Body of pancreas (tissue), 4 donors: ENCODE measurements at regions of chr22 and their contacts with region 1.

Region 1: DNA sequence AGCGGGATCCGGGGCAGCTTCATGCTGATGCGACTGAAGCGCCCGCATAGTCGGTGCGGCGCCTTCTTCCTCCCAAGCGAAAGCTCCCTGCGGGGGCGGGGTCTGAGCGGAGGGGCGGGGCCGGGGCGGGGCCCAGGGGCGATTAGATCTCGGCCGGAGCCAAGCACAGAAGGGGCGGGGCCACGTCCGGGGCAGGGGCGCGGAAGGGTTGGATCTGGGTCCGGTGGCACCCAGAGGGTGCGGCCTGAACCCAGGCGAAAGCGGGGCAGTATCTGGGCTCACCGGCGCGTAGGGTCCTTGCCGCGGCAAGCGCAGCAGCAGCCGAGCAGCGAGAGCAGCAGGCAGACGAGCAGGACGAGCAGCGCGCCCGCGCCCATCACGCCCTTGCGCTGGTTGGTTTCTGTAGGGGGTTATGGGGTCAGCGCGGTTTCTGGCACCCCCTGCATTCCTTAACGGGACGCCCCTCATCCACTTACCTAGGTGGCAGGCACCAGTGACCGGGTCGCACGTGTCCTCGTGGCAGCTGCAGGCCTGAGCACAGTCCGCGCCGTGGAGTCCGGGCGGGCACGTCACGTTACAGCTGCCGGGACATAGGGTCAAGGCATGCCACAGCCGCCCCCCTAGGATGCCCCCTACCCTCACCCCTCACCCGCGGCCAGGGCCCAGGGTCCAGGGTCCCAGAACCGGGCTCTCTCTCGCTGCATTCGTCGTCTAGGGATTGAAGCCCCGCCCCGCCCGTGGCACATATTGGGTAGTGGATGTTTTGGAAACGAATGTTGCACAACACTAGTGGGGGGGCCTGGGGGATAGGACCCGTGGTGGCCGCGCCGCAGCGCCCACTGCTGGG is 8.1 kb downstream of the SCARF2 start:
- DNase-seq: peak; percentile 56 to 73 (median 63)
- ATAC-seq: peak; percentile 43
- H3K4me3 ChIP-seq: peak overlapping the region in 1 of 2 donors; percentile 3
- H3K27ac ChIP-seq: no peak overlapping the region
- H3K4me1 ChIP-seq: peaks cover 38% of the 10 kb centered on the region
- H3K27me3 ChIP-seq: peaks cover 0 to 18% of the 10 kb centered on the region in 2 donors
- CTCF ChIP-seq: no peak
- POLR2A ChIP-seq: no peak

Region 2: DNA sequence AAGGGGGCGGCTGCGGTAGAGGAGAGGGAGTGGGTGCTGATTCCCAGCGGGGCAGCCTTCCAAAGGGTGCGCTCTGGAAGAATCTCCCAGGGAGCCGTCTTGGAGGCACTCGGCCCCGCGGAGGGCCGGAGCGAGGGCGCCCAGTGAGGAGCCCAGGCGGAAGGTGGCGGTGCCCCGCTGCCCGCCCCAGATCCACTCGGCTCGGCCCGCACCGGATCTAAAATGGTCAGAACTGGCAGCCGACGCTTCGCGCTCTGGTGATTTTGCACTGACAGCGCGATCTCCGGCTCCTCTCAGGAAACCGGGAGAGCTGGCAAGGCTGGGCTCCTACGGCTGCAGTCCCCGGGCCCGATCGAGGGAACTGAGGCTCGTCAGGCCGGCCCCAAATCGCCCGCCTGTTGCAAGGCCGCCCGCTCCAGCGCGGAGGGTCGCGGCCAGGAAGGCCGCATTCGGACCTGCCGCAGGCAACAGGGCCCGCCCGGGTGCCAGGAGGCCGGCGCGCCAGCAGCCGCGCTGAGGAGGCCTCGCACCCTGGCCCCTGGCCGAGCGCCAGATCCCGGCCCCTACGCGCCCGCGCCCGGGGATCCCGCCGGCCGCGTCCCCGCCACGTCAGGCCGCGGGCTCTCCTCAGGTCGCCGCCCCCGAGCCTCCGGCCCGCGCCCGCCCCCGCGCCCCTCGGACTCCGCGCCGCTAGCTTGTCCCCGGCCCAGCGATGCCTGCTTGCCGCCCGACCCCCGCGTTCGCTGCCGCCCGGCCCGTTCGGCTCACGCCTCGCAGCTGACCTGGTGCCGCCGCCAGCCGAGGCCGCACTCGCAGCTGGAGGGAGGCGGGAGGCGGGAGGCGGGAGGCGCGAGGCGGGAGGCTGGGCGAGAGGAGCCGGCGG is 65.7 kb after region 1 on chr22 and contains the start of gene KLHL22:
- intact Hi-C with region 1: loop called (anchors 5 kb)
- DNase-seq: peak; percentile 25 to 52 (median 44)
- ATAC-seq: peak; percentile 28
- H3K4me3 ChIP-seq: peak within 1 kb of the TSS; percentile 43 to 61
- H3K27ac ChIP-seq: peak within 1 kb of the TSS; percentile 92 to 97 (median 94)
- H3K4me1 ChIP-seq: peaks cover 32% of the 10 kb centered on the region
- H3K27me3 ChIP-seq: no peaks in the 10 kb centered on the region
- CTCF ChIP-seq: no peak
- POLR2A ChIP-seq: peak in 2 of 3 donors; percentile 21 to 33
- total RNA-seq, gene KLHL22: 10.1 to 11.9 TPM

Region 3: GRCh38 chr22:20523086-20523983 is 93.9 kb after region 1 on chr22:
- intact Hi-C with region 1: no loop called
- DNase-seq: no peak
- ATAC-seq: no peak
- H3K4me3 ChIP-seq: no peak overlapping the region
- H3K27ac ChIP-seq: peak overlapping the region in 1 of 4 donors; percentile 2
- H3K4me1 ChIP-seq: peaks cover 12% of the 10 kb centered on the region
- H3K27me3 ChIP-seq: no peaks in the 10 kb centered on the region
- CTCF ChIP-seq: no peak
- POLR2A ChIP-seq: no peak